ENCODE measurements at regions of chr11 and their contacts with region 1.

Region 1: GRCh38 chr11:131674051-131674755 is 303.8 kb downstream of the NTM start:
- DNase-seq: peak; percentile 53
- H3K4me3 Mint-ChIP-seq: no peak overlapping the region
- H3K27ac Mint-ChIP-seq: no peak overlapping the region
- H3K4me1 Mint-ChIP-seq: no peaks in the 10 kb centered on the region
- H3K27me3 Mint-ChIP-seq: no peaks in the 10 kb centered on the region

Region 2: DNA sequence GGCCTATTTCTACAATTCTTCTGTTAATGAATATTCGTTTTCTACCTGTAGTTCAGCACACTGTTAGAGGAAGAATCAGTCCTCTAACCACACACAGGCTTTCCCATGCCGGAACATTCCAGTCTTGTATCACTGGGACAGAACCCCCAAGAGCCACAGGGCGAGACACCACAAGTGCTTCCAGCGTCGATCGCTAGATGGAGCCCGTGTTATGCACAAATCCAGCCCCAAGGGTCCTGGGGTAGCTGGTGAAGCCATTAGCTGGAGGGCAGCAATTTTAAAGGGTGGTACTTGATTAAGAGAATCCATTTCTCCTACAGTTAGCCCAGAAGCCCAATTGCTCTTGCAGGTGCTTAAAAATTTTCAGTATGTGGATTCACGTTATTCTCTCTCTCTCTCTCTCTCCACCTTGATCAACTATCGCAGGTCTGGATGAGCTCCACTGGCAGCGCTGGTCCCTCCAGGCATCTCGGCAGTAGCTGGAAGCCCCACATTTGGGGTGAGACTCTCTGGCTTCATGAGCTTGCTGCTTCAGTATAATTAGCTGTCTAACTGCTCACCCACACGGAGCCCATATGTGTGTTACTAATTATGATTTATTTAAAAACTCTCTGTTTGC is 609.7 kb before region 1 on chr11:
- CTCF ChIA-PET with region 1: interaction called, 19 read pairs
- POLR2A ChIA-PET with region 1: no interaction called
- DNase-seq: peak; percentile 19
- H3K4me3 Mint-ChIP-seq: no peak overlapping the region
- H3K27ac Mint-ChIP-seq: no peak overlapping the region
- H3K4me1 Mint-ChIP-seq: no peaks in the 10 kb centered on the region
- H3K27me3 Mint-ChIP-seq: no peaks in the 10 kb centered on the region

Region 3: GRCh38 chr11:131649856-131650255 is 24.3 kb before region 1 on chr11:
- CTCF ChIA-PET with region 1: interaction called, 14 read pairs
- POLR2A ChIA-PET with region 1: no interaction called
- DNase-seq: no peak
- H3K4me3 Mint-ChIP-seq: no peak overlapping the region
- H3K27ac Mint-ChIP-seq: no peak overlapping the region
- H3K4me1 Mint-ChIP-seq: no peaks in the 10 kb centered on the region
- H3K27me3 Mint-ChIP-seq: no peaks in the 10 kb centered on the region

Region 4: DNA sequence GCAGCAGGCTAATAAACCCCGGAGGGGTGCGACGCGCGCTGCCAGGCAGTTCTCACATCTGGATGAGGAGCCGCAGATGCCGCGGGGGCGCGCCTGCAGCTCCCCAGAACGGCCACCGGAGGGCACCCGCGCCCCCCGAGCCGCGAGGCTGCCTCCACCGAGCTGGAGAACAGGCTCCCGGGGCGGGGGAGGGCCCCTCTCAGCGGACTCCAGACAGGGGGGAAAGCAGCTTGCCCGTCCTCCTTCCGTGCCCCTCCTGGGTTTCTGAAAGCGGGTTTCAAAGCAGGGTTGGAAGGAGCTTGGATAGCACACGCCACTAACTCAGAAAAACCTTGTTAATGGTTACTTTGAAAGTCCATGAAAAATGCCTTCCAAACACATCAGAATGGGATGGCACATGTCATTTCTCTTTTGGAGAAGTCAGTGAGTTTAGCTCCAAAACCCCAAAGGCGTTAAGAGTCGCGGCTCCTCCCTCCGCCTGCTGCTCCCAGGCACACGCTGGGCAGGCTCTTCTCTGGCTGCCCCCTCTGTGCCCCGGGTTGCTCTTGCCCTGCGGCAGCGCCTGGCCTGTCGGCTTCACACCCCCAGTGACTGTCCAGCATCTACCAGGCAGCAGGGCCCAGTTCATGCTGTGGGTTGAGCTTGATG is 14.0 kb after region 1 on chr11:
- CTCF ChIA-PET with region 1: interaction called, 13 read pairs
- POLR2A ChIA-PET with region 1: no interaction called
- DNase-seq: peak; percentile 37
- H3K4me3 Mint-ChIP-seq: no peak overlapping the region
- H3K27ac Mint-ChIP-seq: no peak overlapping the region
- H3K4me1 Mint-ChIP-seq: peaks cover 2% of the 10 kb centered on the region
- H3K27me3 Mint-ChIP-seq: no peaks in the 10 kb centered on the region

Region 5: GRCh38 chr11:131748151-131749050 is 74.2 kb after region 1 on chr11:
- CTCF ChIA-PET with region 1: no interaction called
- POLR2A ChIA-PET with region 1: no interaction called
- DNase-seq: peak; percentile 33
- H3K4me3 Mint-ChIP-seq: no peak overlapping the region
- H3K27ac Mint-ChIP-seq: no peak overlapping the region
- H3K4me1 Mint-ChIP-seq: no peaks in the 10 kb centered on the region
- H3K27me3 Mint-ChIP-seq: no peaks in the 10 kb centered on the region

Region 6: DNA sequence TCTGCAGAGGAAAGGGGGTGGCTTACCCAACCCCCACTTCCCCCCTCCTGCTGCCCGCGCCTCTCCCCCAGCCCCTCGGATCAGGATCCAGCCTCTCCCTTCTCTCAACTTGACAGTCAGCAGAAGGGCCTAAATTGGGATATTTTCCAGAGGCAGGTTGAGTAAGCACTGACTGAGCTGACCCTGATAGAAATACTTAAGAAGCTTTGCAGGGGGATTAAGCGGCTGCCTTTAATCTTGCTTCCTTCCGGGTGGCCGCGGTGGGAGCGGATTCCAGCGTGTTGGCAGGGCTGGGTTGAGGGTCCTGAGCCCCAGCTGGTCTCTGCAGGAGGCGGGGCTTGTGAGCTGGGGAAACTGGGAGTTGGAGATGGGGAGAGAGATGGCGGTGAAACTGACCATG is 141.4 kb after region 1 on chr11:
- CTCF ChIA-PET with region 1: no interaction called
- POLR2A ChIA-PET with region 1: no interaction called
- DNase-seq: no peak
- H3K4me3 Mint-ChIP-seq: no peak overlapping the region
- H3K27ac Mint-ChIP-seq: no peak overlapping the region
- H3K4me1 Mint-ChIP-seq: no peaks in the 10 kb centered on the region
- H3K27me3 Mint-ChIP-seq: no peaks in the 10 kb centered on the region

Measured in activated CD4-positive, alpha-beta memory T cell treated with anti-CD3 and anti-CD28 coated beads, Interleukin-2, amount 10 ng/mL, durations not matched to agents 7 days and 5 days (primary cell).